Activated CD4-positive, alpha-beta memory T cell treated with anti-CD3 and anti-CD28 coated beads, Interleukin-2, amount 10 ng/mL, durations not matched to agents 7 days and 5 days (primary cell): ENCODE measurements at regions of chr1 and their contacts with region 1.

Region 1: GRCh38 chr1:223088713-223089240 is 54.3 kb downstream of the TLR5 start:
- DNase-seq: no peak
- H3K4me3 Mint-ChIP-seq: no peak overlapping the region
- H3K27ac Mint-ChIP-seq: no peak overlapping the region
- H3K4me1 Mint-ChIP-seq: no peaks in the 10 kb centered on the region
- H3K27me3 Mint-ChIP-seq: no peaks in the 10 kb centered on the region

Region 2: DNA sequence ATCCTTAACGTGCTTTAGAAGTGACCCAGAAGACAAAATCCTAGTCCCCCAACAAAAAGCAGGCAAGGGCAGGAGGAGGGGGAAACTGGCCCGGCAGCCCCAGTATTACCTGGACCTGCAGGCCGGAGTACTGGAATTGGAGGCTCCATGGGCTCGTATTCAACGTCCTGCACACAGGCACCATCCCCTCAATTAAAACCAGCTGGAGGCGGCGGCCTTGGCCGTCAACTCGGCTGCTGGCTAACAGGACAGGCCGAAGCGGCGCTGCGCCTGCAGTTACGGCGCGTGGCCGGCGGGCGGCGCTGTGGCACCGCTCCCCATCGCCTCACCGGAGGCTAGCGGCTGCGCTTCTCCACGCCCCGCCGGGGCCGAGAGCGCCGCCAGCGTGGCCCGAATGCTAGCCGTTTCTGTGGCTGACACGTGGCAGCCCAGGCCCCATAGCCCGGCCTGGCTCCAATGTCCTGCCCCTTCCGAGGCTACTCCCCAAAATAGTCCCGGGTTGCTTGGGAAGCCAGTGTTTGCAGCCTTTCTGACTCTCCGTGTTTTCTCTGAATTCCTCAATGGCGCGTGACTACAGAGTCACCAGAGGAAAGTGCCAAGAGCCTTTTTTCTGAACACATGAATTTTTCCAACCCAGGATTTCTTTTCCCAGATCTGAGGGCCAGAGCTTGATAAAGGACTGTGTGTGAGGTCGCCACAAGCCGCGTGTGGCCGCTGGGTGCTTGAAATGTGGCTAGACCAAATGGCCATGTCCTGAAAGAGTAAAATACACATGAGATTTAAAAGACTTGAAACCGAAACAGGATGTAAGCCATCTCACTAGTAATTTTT is 623.4 kb before region 1 on chr1:
- CTCF ChIA-PET with region 1: interaction called, 14 read pairs
- POLR2A ChIA-PET with region 1: no interaction called
- DNase-seq: peak; percentile 81
- H3K4me3 Mint-ChIP-seq: peak overlapping the region; percentile 71
- H3K27ac Mint-ChIP-seq: peak overlapping the region; percentile 47
- H3K4me1 Mint-ChIP-seq: peaks cover 10% of the 10 kb centered on the region
- H3K27me3 Mint-ChIP-seq: peaks cover 13% of the 10 kb centered on the region

Region 3: DNA sequence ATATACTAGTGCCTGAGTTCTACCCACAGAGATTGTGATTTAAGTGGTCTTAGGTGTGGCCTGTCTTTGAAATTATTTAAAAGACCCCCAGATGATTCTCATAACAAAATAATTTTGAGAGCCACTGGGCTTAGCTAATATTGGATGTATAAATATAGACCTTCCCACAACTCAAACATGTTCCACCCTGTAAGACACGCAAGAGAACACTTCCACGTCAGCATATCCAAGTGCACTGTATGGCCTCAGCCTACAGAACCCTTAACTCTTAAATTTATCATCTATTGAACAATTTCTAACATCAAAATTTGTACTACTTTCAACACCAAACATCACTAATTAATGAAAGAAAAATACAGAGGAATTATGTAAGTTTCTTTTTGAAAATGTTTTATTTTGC is 349.3 kb before region 1 on chr1:
- CTCF ChIA-PET with region 1: interaction called, 19 read pairs
- POLR2A ChIA-PET with region 1: no interaction called
- DNase-seq: no peak
- H3K4me3 Mint-ChIP-seq: no peak overlapping the region
- H3K27ac Mint-ChIP-seq: no peak overlapping the region
- H3K4me1 Mint-ChIP-seq: no peaks in the 10 kb centered on the region
- H3K27me3 Mint-ChIP-seq: no peaks in the 10 kb centered on the region

Region 4: GRCh38 chr1:222792744-222793143 is 296.0 kb before region 1 on chr1:
- CTCF ChIA-PET with region 1: interaction called, 17 read pairs
- POLR2A ChIA-PET with region 1: no interaction called
- DNase-seq: no peak
- H3K4me3 Mint-ChIP-seq: no peak overlapping the region
- H3K27ac Mint-ChIP-seq: no peak overlapping the region
- H3K4me1 Mint-ChIP-seq: peaks cover 9% of the 10 kb centered on the region
- H3K27me3 Mint-ChIP-seq: no peaks in the 10 kb centered on the region

Region 5: DNA sequence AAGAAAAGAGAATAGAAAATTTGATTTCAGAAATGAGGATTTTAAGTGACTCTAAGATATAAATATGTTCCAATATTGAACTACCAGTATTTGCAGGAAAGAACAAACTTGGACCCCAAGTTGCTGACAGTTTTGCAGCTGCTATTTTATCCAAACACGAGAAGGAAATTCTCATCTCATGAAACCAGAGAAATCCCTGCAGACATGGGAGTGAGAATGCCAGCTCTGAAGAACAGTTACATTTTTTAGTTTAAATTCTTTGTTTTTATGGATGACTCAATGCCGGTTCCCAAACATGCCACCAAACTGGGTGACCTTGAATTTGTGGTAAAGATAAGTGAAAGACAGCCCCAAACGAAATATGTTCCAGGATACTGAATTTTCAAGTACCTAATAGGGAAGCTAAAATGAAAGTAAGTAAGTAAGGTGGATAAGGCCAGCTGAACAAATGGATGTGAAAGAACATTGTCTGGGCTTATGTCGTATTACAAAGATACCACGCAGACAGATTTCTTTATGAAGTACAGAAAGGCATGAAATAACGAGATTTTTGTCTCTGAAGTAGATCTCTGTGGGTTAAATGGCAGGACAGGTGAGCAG is 34.3 kb after region 1 on chr1:
- CTCF ChIA-PET with region 1: interaction called, 27 read pairs
- POLR2A ChIA-PET with region 1: no interaction called
- DNase-seq: no peak
- H3K4me3 Mint-ChIP-seq: no peak overlapping the region
- H3K27ac Mint-ChIP-seq: no peak overlapping the region
- H3K4me1 Mint-ChIP-seq: peaks cover 7% of the 10 kb centered on the region
- H3K27me3 Mint-ChIP-seq: peaks cover 7% of the 10 kb centered on the region